A549 (cell line): ENCODE measurements at regions of chr14 and their contacts with region 1.

Region 1: GRCh38 chr14:74501135-74501614 is 7.6 kb downstream of the ISCA2 start:
- DNase-seq: peak; percentile 49 to 68
- ATAC-seq: peak; percentile 72 to 85
- H3K4me3 ChIP-seq: no peak overlapping the region
- H3K27ac ChIP-seq: peak overlapping the region in 1 of 2 experiments; percentile 68; a peak in 2 of 6 replicates
- H3K4me1 ChIP-seq: peaks cover 12% of the 10 kb centered on the region; the same call in 2 of the 3 replicates
- CTCF ChIP-seq: peak; percentile 56
- EP300 ChIP-seq: no peak
- POLR2A ChIP-seq: no peak
- RAD21 ChIP-seq: peak; percentile 62 to 77

Region 2: DNA sequence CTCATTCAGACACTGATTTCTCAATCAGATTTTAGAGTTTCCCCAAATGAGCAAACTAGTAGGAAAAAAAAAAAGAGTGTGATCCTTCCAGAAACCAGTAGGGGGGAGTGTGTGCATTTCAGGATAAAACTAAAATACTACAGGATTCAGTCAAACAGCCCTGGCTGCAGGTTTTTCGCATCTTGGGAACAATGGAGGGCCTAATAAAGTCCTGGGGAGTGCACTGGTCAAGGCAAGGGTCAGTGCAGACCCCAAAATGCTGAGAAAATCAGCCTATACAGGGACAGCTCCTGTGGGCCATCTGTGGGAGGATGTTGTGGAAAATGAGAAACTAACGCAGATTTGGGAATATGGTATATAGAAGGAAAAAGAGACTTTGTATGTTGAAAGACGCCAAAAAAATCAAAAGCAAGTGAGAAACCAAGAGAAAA is 176.2 kb before region 1 on chr14:
- CTCF ChIA-PET with region 1: no interaction called
- POLR2A ChIA-PET with region 1: no interaction called
- DNase-seq: peak; percentile 42 to 65
- ATAC-seq: peak; percentile 51 to 69; a peak in 4 of 6 replicates
- H3K4me3 ChIP-seq: no peak overlapping the region
- H3K27ac ChIP-seq: no peak overlapping the region
- H3K4me1 ChIP-seq: no peaks in the 10 kb centered on the region
- CTCF ChIP-seq: peak; percentile 59
- EP300 ChIP-seq: no peak
- POLR2A ChIP-seq: no peak
- RAD21 ChIP-seq: peak; percentile 55 to 62; a peak in 4 of 5 replicates

Region 3: DNA sequence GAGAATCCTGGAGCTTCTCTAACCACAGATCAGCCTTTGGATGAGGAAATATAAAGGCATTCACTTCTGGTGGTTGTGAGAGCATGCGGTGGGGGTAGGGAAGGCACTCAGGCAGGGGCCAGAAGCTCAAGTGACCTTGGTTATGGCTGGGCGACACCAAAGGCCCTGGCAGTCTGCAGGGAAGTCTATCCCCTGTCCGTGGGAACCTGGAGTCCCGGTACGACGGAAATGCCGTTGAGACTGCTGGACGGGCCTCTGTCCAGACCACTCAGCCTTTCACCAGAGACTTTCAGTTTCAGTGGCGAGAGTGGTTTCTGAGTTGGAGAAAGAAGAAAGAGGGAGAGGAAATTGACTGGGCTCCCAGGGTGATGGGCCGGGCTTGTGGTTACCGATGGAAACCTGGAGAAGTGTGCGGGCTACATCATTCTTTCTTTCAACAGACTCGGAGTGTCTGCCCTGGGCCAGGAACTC is 13.3 kb after region 1 on chr14:
- CTCF ChIA-PET with region 1: interaction called, 62 read pairs
- POLR2A ChIA-PET with region 1: no interaction called
- DNase-seq: no peak
- ATAC-seq: no peak
- H3K4me3 ChIP-seq: no peak overlapping the region
- H3K27ac ChIP-seq: no peak overlapping the region
- H3K4me1 ChIP-seq: peaks cover 8% of the 10 kb centered on the region
- CTCF ChIP-seq: no peak
- EP300 ChIP-seq: no peak
- POLR2A ChIP-seq: no peak
- RAD21 ChIP-seq: no peak

Region 4: GRCh38 chr14:74525361-74525851 is 24.2 kb after region 1 on chr14:
- CTCF ChIA-PET with region 1: interaction called, 24 read pairs
- POLR2A ChIA-PET with region 1: no interaction called
- DNase-seq: no peak
- ATAC-seq: no peak
- H3K4me3 ChIP-seq: no peak overlapping the region
- H3K27ac ChIP-seq: no peak overlapping the region
- H3K4me1 ChIP-seq: no peaks in the 10 kb centered on the region
- CTCF ChIP-seq: no peak
- EP300 ChIP-seq: no peak
- POLR2A ChIP-seq: no peak
- RAD21 ChIP-seq: no peak

Region 5: DNA sequence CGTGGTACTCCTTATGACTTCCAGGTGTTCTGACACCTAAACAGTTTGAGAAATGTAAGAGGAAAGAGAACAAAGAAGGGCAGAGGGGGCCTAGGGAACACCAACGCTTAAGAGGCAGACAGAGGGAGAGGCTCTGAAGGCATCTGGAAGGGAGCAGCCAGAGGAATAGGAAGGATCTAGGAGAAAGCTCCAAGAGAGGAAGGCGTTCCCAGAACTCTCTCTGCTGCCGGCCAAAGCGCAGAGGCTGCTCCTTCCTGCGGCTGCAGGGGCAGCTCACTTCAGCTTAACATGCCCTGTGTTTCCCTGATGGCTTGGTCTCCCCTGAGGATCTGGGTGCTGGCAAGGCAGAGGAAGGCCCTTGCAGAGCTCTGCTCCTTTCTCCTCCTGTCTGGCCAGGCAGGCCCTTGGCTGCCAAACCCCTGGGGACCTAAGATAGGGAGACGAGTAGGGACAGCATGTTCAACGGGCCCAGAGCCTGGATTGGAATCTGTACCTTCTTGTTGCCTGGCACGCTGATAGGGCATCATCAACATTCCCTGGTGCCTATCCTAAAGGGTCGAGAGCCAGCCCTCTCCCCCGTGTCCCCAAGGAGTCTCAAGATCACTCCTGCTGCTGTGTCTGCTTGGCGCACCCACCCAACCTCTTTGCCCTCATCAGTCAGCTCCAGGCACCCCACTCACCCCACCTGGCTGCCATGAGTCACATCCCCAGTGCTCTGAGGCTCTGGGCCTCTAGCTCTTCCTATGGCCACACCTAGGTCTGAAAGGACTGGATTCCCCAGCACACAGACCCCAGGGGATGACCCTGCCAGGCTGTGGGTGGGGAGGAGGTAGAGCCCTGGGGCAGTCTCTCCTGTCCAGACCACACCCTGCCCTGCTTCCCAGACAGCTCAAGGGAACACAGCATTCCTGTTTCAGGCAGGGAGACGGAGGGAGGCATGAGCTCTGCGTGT is 65.3 kb after region 1 on chr14:
- CTCF ChIA-PET with region 1: interaction called, 10 read pairs
- POLR2A ChIA-PET with region 1: no interaction called
- DNase-seq: peak; percentile 66 to 83
- ATAC-seq: peak; percentile 61 to 78
- H3K4me3 ChIP-seq: no peak overlapping the region
- H3K27ac ChIP-seq: peak overlapping the region; percentile 86 to 95
- H3K4me1 ChIP-seq: peaks cover 75% of the 10 kb centered on the region
- CTCF ChIP-seq: no peak
- EP300 ChIP-seq: peak in 1 of 2 experiments; percentile 54; a peak in 1 of 5 replicates
- POLR2A ChIP-seq: no peak
- RAD21 ChIP-seq: no peak